Endothelial cell of umbilical vein (primary cell): ENCODE measurements at regions of chr4 and their contacts with region 1.

Region 1: DNA sequence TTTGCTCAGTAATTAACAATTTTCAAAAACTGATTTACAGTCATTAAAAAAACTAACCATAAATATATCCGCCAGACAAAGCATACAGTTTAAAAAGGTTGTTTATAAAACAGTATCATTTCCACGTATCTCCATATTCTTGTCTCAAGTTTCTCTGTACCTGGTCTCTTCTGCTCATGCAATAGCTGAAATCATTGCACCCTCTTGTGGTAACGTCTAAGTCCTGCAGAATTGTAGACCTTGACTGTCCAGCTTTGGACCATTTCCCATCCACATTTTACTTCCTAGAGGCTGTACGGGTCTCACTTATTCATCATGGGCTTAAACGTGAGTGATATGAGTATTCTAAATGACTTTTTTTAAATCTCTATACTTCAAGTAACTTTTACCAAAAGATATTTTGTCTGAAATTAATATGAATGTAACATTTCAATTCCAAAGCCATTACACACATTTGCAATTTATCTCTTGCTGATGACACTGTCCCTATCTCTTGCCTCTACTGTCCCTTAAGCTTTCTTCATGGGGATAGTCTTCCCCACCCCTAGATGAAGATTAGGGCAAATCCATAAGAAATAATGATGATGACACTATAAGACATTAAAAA is 118.5 kb downstream of the BTC start:
- DNase-seq: peak; percentile 70
- H3K4me3 ChIP-seq: no peak overlapping the region
- H3K27ac ChIP-seq: no peak overlapping the region
- H3K4me1 ChIP-seq: peaks cover 9% of the 10 kb centered on the region
- H3K27me3 ChIP-seq: no peaks in the 10 kb centered on the region
- CTCF ChIP-seq: peak; percentile 66 to 76
- POLR2A ChIP-seq: no peak

Region 2: DNA sequence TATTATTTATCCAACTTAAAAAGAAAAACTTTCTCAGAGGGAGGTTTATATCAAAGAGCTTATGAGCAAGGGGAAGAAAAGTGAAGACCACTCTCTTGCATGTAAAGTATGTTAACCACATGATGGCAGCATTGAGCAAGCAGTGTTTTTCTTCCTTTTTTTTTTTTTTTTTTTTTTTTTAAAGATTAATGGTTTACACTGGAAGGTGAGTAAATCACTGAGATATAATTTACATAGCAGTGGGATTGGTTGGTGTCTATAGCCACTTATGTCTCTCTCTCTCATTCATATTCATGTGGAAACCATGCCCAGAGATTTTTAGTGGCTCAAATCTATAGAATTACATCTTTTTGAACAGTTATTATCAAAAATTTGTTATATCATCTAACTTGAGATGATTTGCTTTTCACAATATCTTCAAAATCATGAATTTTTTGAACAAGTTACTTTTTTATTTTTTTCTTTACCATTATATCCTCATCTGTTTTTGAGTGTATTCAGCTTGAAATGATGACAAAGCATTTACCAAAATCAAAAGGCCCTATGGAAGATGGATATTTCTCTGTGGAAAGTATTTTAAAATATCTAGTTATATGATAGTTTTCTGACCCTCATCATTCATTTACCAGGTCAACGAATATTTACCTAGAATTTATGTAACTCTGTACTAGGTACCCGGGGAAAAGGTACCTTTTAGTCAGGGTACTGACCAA is 486.3 kb before region 1 on chr4:
- CTCF ChIA-PET with region 1: interaction called, 8 read pairs
- POLR2A ChIA-PET with region 1: no interaction called
- dilution Hi-C with region 1: no loop called
- intact Hi-C with region 1: loop called (anchors 2 kb)
- DNase-seq: peak; percentile 66
- H3K4me3 ChIP-seq: no peak overlapping the region
- H3K27ac ChIP-seq: no peak overlapping the region
- H3K4me1 ChIP-seq: no peaks in the 10 kb centered on the region
- H3K27me3 ChIP-seq: no peaks in the 10 kb centered on the region
- CTCF ChIP-seq: peak; percentile 37 to 63
- POLR2A ChIP-seq: no peak

Region 3: GRCh38 chr4:74327762-74328161 is 348.0 kb before region 1 on chr4:
- CTCF ChIA-PET with region 1: interaction called, 378 read pairs
- POLR2A ChIA-PET with region 1: no interaction called
- dilution Hi-C with region 1: no loop called
- intact Hi-C with region 1: no loop called
- DNase-seq: peak; percentile 78
- H3K4me3 ChIP-seq: peak overlapping the region in 1 of 3 experiments; percentile 19
- H3K27ac ChIP-seq: peak overlapping the region; percentile 65
- H3K4me1 ChIP-seq: peaks cover 20% of the 10 kb centered on the region
- H3K27me3 ChIP-seq: no peaks in the 10 kb centered on the region
- CTCF ChIP-seq: no peak
- POLR2A ChIP-seq: no peak

Region 4: DNA sequence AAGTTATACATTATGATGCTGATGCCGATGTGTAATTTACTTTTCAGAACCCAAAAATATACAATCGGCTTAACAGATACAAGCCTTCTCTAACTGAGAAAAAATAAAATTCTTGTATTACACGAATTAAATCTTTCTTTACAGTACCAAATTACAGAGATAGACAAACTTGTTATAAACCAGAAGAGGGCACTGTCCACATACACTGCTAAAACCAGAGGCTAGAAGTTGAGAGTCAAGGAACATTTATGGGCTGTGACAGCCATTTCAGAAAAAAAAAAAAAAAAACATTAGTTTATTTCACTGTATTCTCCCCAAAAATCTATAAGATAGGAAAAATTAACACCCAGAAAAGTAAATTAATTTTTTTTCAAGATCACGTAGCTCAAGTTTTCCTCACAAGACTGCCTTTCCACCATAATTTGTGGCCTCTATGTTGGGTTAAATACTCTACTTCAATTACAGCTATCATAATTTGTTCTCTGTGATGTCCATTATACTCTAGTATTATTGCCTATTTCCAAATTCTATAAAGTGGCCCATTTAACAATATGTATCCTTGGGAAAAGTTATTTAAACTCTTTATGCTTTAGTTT is 298.8 kb before region 1 on chr4:
- CTCF ChIA-PET with region 1: interaction called, 96 read pairs
- POLR2A ChIA-PET with region 1: no interaction called
- dilution Hi-C with region 1: no loop called
- intact Hi-C with region 1: loop called (anchors 1 kb)
- DNase-seq: peak; percentile 67
- H3K4me3 ChIP-seq: no peak overlapping the region
- H3K27ac ChIP-seq: no peak overlapping the region
- H3K4me1 ChIP-seq: peaks cover 7% of the 10 kb centered on the region
- H3K27me3 ChIP-seq: no peaks in the 10 kb centered on the region
- CTCF ChIP-seq: peak; percentile 31
- POLR2A ChIP-seq: no peak

Region 5: GRCh38 chr4:74531963-74532794 is 143.6 kb before region 1 on chr4:
- CTCF ChIA-PET with region 1: interaction called, 126 read pairs
- POLR2A ChIA-PET with region 1: no interaction called
- dilution Hi-C with region 1: no loop called
- intact Hi-C with region 1: loop called (anchors 1 kb)
- DNase-seq: peak; percentile 87
- H3K4me3 ChIP-seq: no peak overlapping the region
- H3K27ac ChIP-seq: no peak overlapping the region
- H3K4me1 ChIP-seq: no peaks in the 10 kb centered on the region
- H3K27me3 ChIP-seq: no peaks in the 10 kb centered on the region
- CTCF ChIP-seq: peak; percentile 53 to 60
- POLR2A ChIP-seq: no peak

Region 6: GRCh38 chr4:74632634-74633033 is 43.1 kb before region 1 on chr4:
- CTCF ChIA-PET with region 1: interaction called, 23 read pairs
- POLR2A ChIA-PET with region 1: no interaction called
- dilution Hi-C with region 1: no loop called
- intact Hi-C with region 1: loop called (anchors 2 kb)
- DNase-seq: peak; percentile 99
- H3K4me3 ChIP-seq: no peak overlapping the region
- H3K27ac ChIP-seq: peak overlapping the region; percentile 75
- H3K4me1 ChIP-seq: peaks cover 45% of the 10 kb centered on the region
- H3K27me3 ChIP-seq: no peaks in the 10 kb centered on the region
- CTCF ChIP-seq: no peak
- POLR2A ChIP-seq: peak; percentile 76